ENCODE measurements at regions of chr16 and their contacts with region 1.

Region 1: DNA sequence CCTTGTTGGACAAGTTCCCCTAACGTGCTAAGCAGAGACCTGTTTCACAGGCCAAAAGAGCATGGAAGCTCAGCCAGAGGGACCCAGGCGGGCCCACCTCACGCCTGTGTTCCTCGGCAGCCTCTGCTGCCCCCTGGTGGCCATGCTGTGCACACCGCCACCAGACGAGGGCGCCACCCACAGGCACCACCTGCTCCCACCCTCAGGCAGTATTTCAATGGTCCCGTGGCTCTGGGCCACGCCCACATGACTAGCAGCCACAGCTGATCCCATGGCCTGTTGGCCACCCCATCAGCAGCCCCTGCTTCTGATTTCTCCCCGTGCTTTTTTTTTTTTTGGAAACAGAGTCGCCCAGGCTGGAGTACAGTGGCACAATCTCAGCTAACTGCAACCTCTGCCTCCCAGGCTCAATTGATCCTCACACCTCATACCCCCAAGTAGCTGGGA is 18.9 kb downstream of the MPG start:
- DNase-seq: no peak
- H3K4me3 ChIP-seq: no peak overlapping the region
- CTCF ChIP-seq: peak; percentile 100

Region 2: DNA sequence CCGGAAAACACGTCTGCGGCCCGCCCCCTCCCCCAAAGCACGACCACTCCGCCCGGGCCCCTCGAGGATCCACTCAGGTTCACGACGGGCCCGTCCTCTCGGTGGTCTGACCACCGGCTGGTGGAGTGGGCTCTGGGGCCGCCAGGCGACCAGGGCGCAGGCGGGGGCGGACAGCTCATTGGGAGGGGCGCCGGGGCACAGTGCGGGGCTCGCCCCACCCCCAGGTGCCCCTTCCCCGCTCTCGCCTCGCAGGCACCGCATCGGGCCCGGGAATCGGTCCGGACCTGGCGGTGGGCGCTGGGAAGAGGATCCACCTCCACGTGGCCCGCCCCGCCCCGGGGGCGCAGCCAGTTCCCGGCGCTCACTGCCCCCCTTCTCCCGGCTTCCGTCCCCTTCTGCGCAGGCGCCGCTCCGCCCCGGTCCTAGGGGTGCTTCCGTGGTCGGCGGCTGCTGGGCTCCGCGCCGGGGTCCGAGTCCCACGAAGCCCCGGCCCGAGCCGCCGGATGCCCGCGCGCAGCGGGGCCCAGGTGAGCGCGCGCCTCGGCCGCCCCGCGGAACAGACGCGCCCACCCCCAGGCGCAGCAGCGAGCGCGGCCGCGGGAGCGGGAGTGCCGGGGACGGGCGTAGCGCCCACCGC is 19.0 kb before region 1 on chr16 and contains the start of gene MPG:
- CTCF ChIA-PET with region 1: interaction called, 728 read pairs
- POLR2A ChIA-PET with region 1: interaction called, 3 read pairs
- DNase-seq: no peak
- H3K4me3 ChIP-seq: peak within 1 kb of the TSS; percentile 74
- CTCF ChIP-seq: no peak

Region 3: GRCh38 chr16:84718-85406 is 12.1 kb before region 1 on chr16:
- CTCF ChIA-PET with region 1: interaction called, 728 read pairs
- POLR2A ChIA-PET with region 1: no interaction called
- DNase-seq: peak; percentile 70
- H3K4me3 ChIP-seq: no peak overlapping the region
- CTCF ChIP-seq: no peak

Region 4: DNA sequence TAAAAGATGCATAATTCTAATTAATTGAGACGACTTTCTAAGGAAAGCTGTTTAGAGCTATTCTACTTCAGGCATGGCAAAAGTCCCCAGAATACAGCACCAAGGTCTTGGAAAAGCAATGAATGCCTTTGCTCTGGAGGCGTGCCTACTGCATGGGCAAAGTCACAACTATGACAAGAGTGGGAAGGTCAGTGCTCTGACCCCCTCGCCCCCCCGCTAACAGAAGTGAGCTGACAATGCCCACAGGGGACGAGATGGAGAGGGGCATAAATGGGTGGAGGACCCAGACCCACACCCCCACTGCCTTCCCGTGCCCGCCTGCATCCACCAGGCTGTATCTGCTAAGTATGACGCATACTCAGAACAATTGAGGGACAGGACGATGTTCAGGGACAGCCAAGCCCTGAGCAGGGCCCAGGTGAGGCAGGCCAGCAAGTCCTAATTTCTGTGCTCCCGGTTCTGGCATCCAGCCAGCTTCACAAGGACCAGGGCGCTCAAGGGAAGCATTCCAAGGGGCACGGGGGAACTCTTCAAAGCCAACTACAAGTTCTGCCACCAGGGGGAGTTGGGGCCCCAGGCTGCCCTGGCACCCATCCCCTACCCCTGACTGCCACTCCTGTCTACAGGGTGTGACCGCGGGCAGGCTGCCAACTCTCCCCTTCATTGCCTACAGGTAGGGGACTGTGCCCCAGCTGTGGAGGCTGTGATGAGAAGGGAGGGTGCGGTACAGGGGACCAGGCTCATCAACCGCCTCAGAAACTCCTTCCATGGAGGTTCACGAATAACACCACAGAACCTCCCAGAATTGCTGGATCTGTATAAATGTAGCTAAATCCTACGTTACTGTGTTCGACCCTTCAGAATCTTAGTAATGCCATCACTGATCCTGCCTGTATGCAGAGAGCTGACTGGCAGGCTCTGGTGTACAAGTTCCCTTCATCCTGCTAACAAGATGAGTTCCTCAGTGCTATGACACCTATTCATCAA is 20.7 kb after region 1 on chr16:
- CTCF ChIA-PET with region 1: interaction called, 120 read pairs
- POLR2A ChIA-PET with region 1: no interaction called
- DNase-seq: no peak
- H3K4me3 ChIP-seq: no peak overlapping the region
- CTCF ChIP-seq: peak; percentile 70

Region 5: GRCh38 chr16:278863-279366 is 182.0 kb after region 1 on chr16:
- CTCF ChIA-PET with region 1: no interaction called
- POLR2A ChIA-PET with region 1: no interaction called
- DNase-seq: no peak
- H3K4me3 ChIP-seq: no peak overlapping the region
- CTCF ChIP-seq: no peak

Region 6: GRCh38 chr16:361872-362701 is 265.1 kb after region 1 on chr16:
- CTCF ChIA-PET with region 1: interaction called, 10 read pairs
- POLR2A ChIA-PET with region 1: no interaction called
- DNase-seq: no peak
- H3K4me3 ChIP-seq: no peak overlapping the region
- CTCF ChIP-seq: peak; percentile 88

Region 7: DNA sequence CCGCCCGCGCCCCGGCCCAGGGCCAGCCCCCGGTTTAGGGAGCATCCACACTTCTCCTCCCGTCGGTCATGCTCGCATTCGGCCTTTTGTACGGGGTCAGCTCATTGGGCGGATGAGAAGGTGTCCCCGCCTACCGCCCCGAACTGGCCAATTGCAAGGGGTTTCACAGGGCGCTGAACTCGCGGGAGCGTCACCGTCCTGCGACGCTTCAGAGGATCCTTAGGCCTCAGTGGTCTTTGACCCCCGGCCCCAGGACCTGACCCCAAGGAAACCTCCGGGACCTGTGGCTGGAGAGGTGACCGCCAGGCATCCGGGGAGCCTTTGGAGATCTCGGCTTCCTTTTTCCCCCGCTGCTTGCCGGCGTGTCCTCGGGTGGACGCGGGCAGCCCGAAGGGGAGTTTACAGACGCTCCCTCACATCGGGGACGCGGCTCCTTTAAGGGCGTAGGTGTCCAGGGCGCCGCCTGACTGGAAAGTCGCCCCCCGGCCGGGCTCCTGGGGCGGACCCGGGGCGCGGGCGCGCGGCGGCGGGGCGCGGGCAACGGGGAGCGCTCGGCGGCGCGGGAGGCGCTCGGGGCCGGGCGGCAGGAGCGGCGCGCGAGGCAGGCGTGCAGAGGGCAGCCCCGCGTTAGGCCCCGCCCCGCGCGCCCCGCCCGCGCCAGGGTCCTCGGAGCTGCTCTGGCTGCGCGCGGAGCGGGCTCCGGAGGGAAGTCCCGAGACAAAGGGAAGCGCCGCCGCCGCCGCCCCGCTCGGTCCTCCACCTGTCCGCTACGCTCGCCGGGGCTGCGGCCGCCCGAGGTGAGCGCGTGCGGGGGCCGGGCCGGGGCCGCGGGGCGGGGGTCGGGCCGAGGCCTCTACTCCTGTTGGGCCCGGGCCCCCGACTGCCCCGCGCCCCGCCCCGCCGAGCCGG is 1212.3 kb after region 1 on chr16 and contains the start of gene UBE2I:
- CTCF ChIA-PET with region 1: no interaction called
- POLR2A ChIA-PET with region 1: no interaction called
- DNase-seq: peak; percentile 90
- H3K4me3 ChIP-seq: peak within 1 kb of the TSS; percentile 76
- CTCF ChIP-seq: no peak